ENCODE measurements at regions of chr6 and their contacts with region 1.

Region 1: GRCh38 chr6:24910961-24911712 is 24.6 kb downstream of the RIPOR2 start:
- DNase-seq: peak; percentile 66
- H3K4me3 Mint-ChIP-seq: peak overlapping the region; percentile 92
- H3K27ac Mint-ChIP-seq: peak overlapping the region; percentile 93
- H3K4me1 Mint-ChIP-seq: peaks cover 94% of the 10 kb centered on the region
- H3K27me3 Mint-ChIP-seq: no peaks in the 10 kb centered on the region

Region 2: DNA sequence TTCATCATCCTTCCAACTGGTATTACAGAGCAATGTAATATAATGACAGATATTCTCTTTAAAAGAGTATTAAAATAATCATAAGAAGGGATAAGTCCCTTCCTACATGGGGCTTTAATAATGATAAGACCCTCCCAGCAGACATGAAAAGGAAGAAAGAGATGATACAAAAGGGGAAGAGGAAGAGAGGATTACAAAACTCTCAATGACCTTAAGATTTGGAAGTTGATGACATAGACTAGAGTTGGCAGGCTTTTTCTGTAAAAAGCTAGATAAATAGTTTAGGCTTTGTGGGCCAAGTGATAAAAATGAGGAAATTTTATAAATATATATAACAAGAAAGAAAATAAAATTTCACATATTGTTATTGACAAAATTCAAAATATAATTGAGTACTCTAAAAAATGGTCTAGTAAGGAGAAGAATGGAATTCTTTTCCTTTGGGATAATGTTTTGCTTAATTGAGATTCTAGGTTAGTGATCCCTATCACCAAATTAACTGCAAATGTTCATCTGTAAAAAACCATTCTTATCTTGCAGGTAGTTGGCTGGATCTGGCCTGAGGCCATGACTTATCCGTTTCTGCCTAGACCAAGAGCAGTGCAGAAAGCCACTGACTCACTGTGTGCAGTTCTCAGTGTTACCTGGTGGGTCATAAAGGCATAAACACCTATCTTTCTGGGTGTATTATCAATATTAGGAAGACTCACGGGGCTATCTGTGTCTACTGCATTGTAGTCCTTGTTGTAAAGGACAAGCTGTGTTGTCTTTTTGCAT is 13.6 kb after region 1 on chr6:
- CTCF ChIA-PET with region 1: interaction called, 27 read pairs
- DNase-seq: peak; percentile 47
- H3K4me3 Mint-ChIP-seq: peak overlapping the region; percentile 64
- H3K27ac Mint-ChIP-seq: peak overlapping the region; percentile 87
- H3K4me1 Mint-ChIP-seq: peaks cover 85% of the 10 kb centered on the region
- H3K27me3 Mint-ChIP-seq: no peaks in the 10 kb centered on the region

Measured in activated naive CD4-positive, alpha-beta T cell treated with anti-CD3 and anti-CD28 coated beads, Interleukin-2, amount 10 ng/mL, durations not matched to agents 7 days and 5 days (primary cell).